T-cell (primary cell): ENCODE measurements at regions of chr18 and their contacts with region 1.

Region 1: GRCh38 chr18:830315-830901 is 18.4 kb upstream of the YES1 start:
- DNase-seq: peak in 31 of 35 experiments; percentile 8 to 77 (median 49)
- ATAC-seq: peak; percentile 73 to 92 (median 82)
- H3K4me3 ChIP-seq: no peak overlapping the region
- H3K4me3 Mint-ChIP-seq: peak overlapping the region; percentile 10 to 55 (median 19)
- H3K27ac ChIP-seq: peak overlapping the region; percentile 57
- H3K27ac Mint-ChIP-seq: peak overlapping the region; percentile 77 to 79
- H3K4me1 ChIP-seq: peaks cover 19 to 21% of the 10 kb centered on the region in 2 experiments
- H3K4me1 Mint-ChIP-seq: peaks cover 24 to 32% (median 27%) of the 10 kb centered on the region in 3 donors
- H3K27me3 ChIP-seq: peaks cover 0 to 2% of the 10 kb centered on the region in 2 experiments
- H3K27me3 Mint-ChIP-seq: no peaks in the 10 kb centered on the region

Region 2: GRCh38 chr18:623761-624620 is 206.4 kb before region 1 on chr18:
- CTCF ChIA-PET with region 1: interaction called, 13 to 54 read pairs
- POLR2A ChIA-PET with region 1: interaction called in 1 of 2 experiments, 4 read pairs
- DNase-seq: peak in 31 of 35 experiments; percentile 9 to 71 (median 42)
- ATAC-seq: peak in 3 of 4 experiments; percentile 43 to 66 (median 52)
- H3K4me3 ChIP-seq: no peak overlapping the region
- H3K4me3 Mint-ChIP-seq: no peak overlapping the region
- H3K27ac ChIP-seq: no peak overlapping the region
- H3K27ac Mint-ChIP-seq: no peak overlapping the region
- H3K4me1 ChIP-seq: no peaks in the 10 kb centered on the region
- H3K4me1 Mint-ChIP-seq: peaks cover 0 to 2% (median 0%) of the 10 kb centered on the region in 3 donors
- H3K27me3 ChIP-seq: peaks cover 0 to 15% of the 10 kb centered on the region in 2 experiments
- H3K27me3 Mint-ChIP-seq: peaks cover 6 to 10% of the 10 kb centered on the region in 2 donors

Region 3: GRCh38 chr18:712401-713134 is 117.8 kb before region 1 on chr18 and contains the start of gene ENOSF1:
- CTCF ChIA-PET with region 1: interaction called, 3 to 13 read pairs
- POLR2A ChIA-PET with region 1: no interaction called
- DNase-seq: peak; percentile 39 to 88 (median 73)
- ATAC-seq: peak; percentile 71 to 91 (median 89)
- H3K4me3 ChIP-seq: peak within 1 kb of the TSS; percentile 77 to 87
- H3K4me3 Mint-ChIP-seq: peak within 1 kb of the TSS; percentile 83 to 91 (median 84)
- H3K27ac ChIP-seq: peak within 1 kb of the TSS; percentile 92
- H3K27ac Mint-ChIP-seq: peak within 1 kb of the TSS; percentile 87 to 90
- H3K4me1 ChIP-seq: peaks cover 4 to 33% of the 10 kb centered on the region in 2 experiments
- H3K4me1 Mint-ChIP-seq: peaks cover 26 to 43% (median 39%) of the 10 kb centered on the region in 3 donors
- H3K27me3 ChIP-seq: no peaks in the 10 kb centered on the region
- H3K27me3 Mint-ChIP-seq: no peaks in the 10 kb centered on the region
- total RNA-seq, gene ENOSF1: 70.8 to 97.6 (median 75.8) TPM

Region 4: GRCh38 chr18:741931-742512 is 88.4 kb before region 1 on chr18:
- CTCF ChIA-PET with region 1: interaction called, 67 to 106 read pairs
- POLR2A ChIA-PET with region 1: interaction called, 3 read pairs
- DNase-seq: peak in 2 of 35 experiments; percentile 10 to 69
- ATAC-seq: peak; percentile 60 to 76 (median 66)
- H3K4me3 ChIP-seq: no peak overlapping the region
- H3K4me3 Mint-ChIP-seq: no peak overlapping the region
- H3K27ac ChIP-seq: no peak overlapping the region
- H3K27ac Mint-ChIP-seq: peak overlapping the region in 1 of 2 donors; percentile 22
- H3K4me1 ChIP-seq: peaks cover 0 to 2% of the 10 kb centered on the region in 2 experiments
- H3K4me1 Mint-ChIP-seq: peaks cover 0 to 2% (median 0%) of the 10 kb centered on the region in 3 donors
- H3K27me3 ChIP-seq: no peaks in the 10 kb centered on the region
- H3K27me3 Mint-ChIP-seq: no peaks in the 10 kb centered on the region

Region 5: GRCh38 chr18:799943-800342 is 30.5 kb before region 1 on chr18:
- CTCF ChIA-PET with region 1: interaction called, 4 to 11 read pairs
- POLR2A ChIA-PET with region 1: interaction called in 1 of 2 experiments, 5 read pairs
- DNase-seq: no peak
- ATAC-seq: peak in 1 of 4 experiments; percentile 39
- H3K4me3 ChIP-seq: no peak overlapping the region
- H3K4me3 Mint-ChIP-seq: no peak overlapping the region
- H3K27ac ChIP-seq: no peak overlapping the region
- H3K27ac Mint-ChIP-seq: no peak overlapping the region
- H3K4me1 ChIP-seq: peaks cover 15 to 24% of the 10 kb centered on the region in 2 experiments
- H3K4me1 Mint-ChIP-seq: peaks cover 52 to 84% (median 61%) of the 10 kb centered on the region in 3 donors
- H3K27me3 ChIP-seq: no peaks in the 10 kb centered on the region
- H3K27me3 Mint-ChIP-seq: no peaks in the 10 kb centered on the region

Region 6: GRCh38 chr18:812376-813171 is 17.8 kb before region 1 on chr18:
- CTCF ChIA-PET with region 1: interaction called, 12 to 40 read pairs
- POLR2A ChIA-PET with region 1: interaction called, 6 to 7 read pairs
- DNase-seq: peak; percentile 63 to 85 (median 75)
- ATAC-seq: peak; percentile 65 to 75 (median 70)
- H3K4me3 ChIP-seq: peak overlapping the region; percentile 91 to 92
- H3K4me3 Mint-ChIP-seq: peak overlapping the region; percentile 93 to 95 (median 94)
- H3K27ac ChIP-seq: peak overlapping the region; percentile 96
- H3K27ac Mint-ChIP-seq: peak overlapping the region; percentile 97 to 98
- H3K4me1 ChIP-seq: peaks cover 40 to 53% of the 10 kb centered on the region in 2 experiments
- H3K4me1 Mint-ChIP-seq: peaks cover 65 to 70% (median 68%) of the 10 kb centered on the region in 3 donors
- H3K27me3 ChIP-seq: peaks cover 0 to 4% of the 10 kb centered on the region in 2 experiments
- H3K27me3 Mint-ChIP-seq: peaks cover 0 to 2% of the 10 kb centered on the region in 2 donors